ENCODE measurements at regions of chr5 and their contacts with region 1.

Region 1: GRCh38 chr5:115209279-115209678 is 39.6 kb upstream of the TRIM36 start:
- DNase-seq: peak; percentile 62
- H3K4me3 Mint-ChIP-seq: no peak overlapping the region
- H3K27ac Mint-ChIP-seq: peak overlapping the region; percentile 67
- H3K4me1 Mint-ChIP-seq: peaks cover 22% of the 10 kb centered on the region
- H3K27me3 Mint-ChIP-seq: no peaks in the 10 kb centered on the region

Region 2: DNA sequence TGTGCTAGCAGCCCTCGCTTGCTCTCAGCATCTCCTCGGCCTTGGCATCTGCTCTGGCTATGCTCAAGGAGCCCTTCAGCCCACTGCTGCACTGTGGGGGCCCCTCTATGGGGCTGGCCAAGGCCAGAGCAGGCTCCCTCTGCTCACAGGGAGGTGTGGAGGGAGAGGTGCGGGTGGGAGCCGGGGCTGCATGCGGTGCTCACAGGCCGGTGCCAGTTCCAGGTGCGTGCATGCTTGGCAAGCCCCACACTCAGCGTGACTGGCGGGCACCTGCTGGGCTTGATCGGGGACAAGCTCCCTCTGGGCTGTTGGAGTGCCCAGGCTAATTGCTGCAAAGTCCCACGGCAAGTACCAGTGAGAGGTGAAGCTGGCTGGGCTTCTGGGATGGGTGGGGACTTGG is 210.1 kb before region 1 on chr5:
- intact Hi-C with region 1: no loop called
- DNase-seq: no peak
- H3K4me3 Mint-ChIP-seq: no peak overlapping the region
- H3K27ac Mint-ChIP-seq: no peak overlapping the region
- H3K4me1 Mint-ChIP-seq: no peaks in the 10 kb centered on the region
- H3K27me3 Mint-ChIP-seq: no peaks in the 10 kb centered on the region

Region 3: DNA sequence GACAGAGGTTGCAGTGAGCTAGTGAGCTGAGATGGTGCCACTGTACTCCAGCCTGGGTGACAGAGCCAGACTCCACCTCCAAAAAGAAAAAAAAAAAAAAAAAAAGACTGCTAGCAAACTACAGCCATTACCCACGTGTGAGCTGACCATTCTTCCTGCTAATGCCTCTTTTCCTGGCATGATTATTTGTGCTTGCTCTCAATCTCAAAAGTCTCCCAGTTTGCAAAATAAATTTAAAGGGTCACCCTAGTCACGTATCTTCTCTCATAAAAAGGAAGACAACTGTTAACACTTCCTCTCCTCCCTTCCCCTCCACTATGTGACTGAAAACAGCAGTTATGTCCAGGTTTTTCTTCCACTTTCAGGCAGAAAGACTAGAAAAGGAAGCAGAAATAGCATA is 76.8 kb before region 1 on chr5:
- intact Hi-C with region 1: no loop called
- DNase-seq: no peak
- H3K4me3 Mint-ChIP-seq: no peak overlapping the region
- H3K27ac Mint-ChIP-seq: no peak overlapping the region
- H3K4me1 Mint-ChIP-seq: peaks cover 2% of the 10 kb centered on the region
- H3K27me3 Mint-ChIP-seq: peaks cover 16% of the 10 kb centered on the region

Region 4: DNA sequence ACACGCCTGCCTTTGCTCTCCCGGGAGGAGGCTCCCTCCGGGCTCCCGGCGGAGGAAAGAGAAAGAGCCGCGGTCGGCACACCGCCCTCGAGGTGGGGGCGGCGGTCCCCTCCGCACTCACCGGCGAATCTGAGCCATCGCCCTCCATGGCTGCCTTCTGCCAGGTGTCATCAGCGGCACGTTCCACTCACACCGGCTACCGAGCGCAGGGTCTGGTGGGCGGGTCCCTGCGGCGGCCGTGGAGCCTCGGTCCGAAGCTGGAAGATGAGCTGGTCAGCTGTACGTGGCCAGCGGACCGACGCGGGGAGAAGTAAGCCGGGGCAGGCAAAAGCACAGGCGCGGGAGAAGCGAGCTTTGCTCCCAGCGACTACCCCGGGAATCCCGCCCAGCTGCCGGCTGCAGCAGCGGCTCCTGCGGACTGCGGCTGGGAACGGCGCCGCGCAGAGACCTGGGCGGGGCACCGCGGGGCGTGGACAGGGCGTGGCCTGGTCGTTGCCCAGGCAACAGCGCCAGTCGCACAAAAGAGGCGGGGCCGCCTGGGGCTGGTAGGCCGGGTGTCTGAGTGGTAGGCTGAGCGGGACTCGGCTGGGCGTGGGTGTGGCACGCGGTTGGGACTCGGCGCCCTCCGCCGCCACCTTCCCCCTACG is 39.7 kb before region 1 on chr5 and contains the start of gene TRIM36:
- intact Hi-C with region 1: loop called (anchors 1 kb)
- DNase-seq: peak; percentile 92
- H3K4me3 Mint-ChIP-seq: peak within 1 kb of the TSS; percentile 76
- H3K27ac Mint-ChIP-seq: no peak within 1 kb of the TSS
- H3K4me1 Mint-ChIP-seq: peaks cover 10% of the 10 kb centered on the region
- H3K27me3 Mint-ChIP-seq: peaks cover 60% of the 10 kb centered on the region
- total RNA-seq, gene TRIM36: not detected in 2 replicates

Region 5: DNA sequence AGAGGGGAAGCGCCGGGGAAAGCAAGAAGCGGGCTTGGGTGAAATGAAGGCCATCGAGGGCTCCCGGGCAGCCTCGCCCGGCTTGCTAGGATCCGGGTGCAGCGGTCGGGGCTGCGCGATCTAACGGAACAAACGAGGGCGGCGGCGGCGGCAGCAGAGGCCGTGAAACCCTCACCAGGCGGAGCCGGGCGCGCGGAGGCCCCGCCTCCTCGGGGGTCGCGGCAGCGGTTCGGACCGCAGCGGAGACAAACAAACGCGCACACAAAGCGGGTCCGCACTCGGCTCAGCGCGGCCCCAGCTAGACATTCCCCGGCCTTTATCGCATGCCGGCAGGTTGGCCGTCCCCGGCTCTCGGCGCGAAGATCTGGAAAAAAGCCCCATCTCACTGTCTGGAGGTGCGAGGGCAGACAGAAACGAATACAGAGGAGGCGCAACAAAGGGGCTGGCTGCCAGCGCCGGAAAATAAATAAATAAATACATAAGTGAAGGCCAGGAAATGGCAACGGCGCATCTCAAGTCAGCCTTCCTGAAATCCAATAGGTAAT is 29.0 kb before region 1 on chr5:
- intact Hi-C with region 1: loop called (anchors 1 kb)
- DNase-seq: no peak
- H3K4me3 Mint-ChIP-seq: peak overlapping the region; percentile 80
- H3K27ac Mint-ChIP-seq: no peak overlapping the region
- H3K4me1 Mint-ChIP-seq: peaks cover 8% of the 10 kb centered on the region
- H3K27me3 Mint-ChIP-seq: peaks cover 83% of the 10 kb centered on the region

Region 6: GRCh38 chr5:115246361-115246991 is 37.2 kb after region 1 on chr5:
- intact Hi-C with region 1: loop called (anchors 1 kb)
- DNase-seq: no peak
- H3K4me3 Mint-ChIP-seq: no peak overlapping the region
- H3K27ac Mint-ChIP-seq: no peak overlapping the region
- H3K4me1 Mint-ChIP-seq: peaks cover 12% of the 10 kb centered on the region
- H3K27me3 Mint-ChIP-seq: no peaks in the 10 kb centered on the region

Region 7: GRCh38 chr5:115262321-115263077 is 53.2 kb after region 1 on chr5 and contains the start of gene PGGT1B:
- intact Hi-C with region 1: loop called (anchors 5 kb)
- DNase-seq: peak; percentile 60
- H3K4me3 Mint-ChIP-seq: peak within 1 kb of the TSS; percentile 91
- H3K27ac Mint-ChIP-seq: peak within 1 kb of the TSS; percentile 83
- H3K4me1 Mint-ChIP-seq: peaks cover 22% of the 10 kb centered on the region
- H3K27me3 Mint-ChIP-seq: no peaks in the 10 kb centered on the region
- total RNA-seq, gene PGGT1B: 39.1 and 39.5 TPM in 2 replicates

Region 8: DNA sequence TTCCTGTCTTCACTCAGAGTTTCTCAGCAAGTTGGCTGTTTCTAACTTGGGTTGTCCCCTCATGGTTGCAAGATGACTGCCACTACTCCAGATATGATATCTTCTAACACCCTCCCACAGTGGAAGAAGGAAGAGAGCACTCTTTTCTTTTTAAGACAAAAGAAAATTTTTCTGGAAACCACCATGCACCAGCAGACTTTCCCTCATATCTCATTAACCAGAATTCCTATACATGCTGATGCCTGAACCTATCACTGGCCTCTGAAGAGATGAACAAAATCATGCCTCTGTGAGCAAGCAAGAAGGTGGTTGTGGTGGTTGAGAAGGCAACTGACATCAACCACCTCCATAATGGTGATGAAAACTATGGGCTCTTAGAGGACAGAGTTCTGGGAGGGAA is 278.5 kb after region 1 on chr5:
- intact Hi-C with region 1: loop called (anchors 1 kb)
- DNase-seq: no peak
- H3K4me3 Mint-ChIP-seq: no peak overlapping the region
- H3K27ac Mint-ChIP-seq: peak overlapping the region; percentile 70
- H3K4me1 Mint-ChIP-seq: peaks cover 16% of the 10 kb centered on the region
- H3K27me3 Mint-ChIP-seq: peaks cover 5% of the 10 kb centered on the region

Region 9: GRCh38 chr5:115625579-115626444 is 416.5 kb after region 1 on chr5 and contains the start of gene TMED7:
- intact Hi-C with region 1: loop called (anchors 5 kb)
- DNase-seq: peak; percentile 98
- H3K4me3 Mint-ChIP-seq: no peak within 1 kb of the TSS
- H3K27ac Mint-ChIP-seq: peak within 1 kb of the TSS; percentile 89
- H3K4me1 Mint-ChIP-seq: peaks cover 20% of the 10 kb centered on the region
- H3K27me3 Mint-ChIP-seq: peaks cover 13% of the 10 kb centered on the region
- total RNA-seq, gene TMED7: 40.2 and 40.9 TPM in 2 replicates